H1 (cell line): ENCODE measurements at regions of chr15 and their contacts with region 1.

Region 1: DNA sequence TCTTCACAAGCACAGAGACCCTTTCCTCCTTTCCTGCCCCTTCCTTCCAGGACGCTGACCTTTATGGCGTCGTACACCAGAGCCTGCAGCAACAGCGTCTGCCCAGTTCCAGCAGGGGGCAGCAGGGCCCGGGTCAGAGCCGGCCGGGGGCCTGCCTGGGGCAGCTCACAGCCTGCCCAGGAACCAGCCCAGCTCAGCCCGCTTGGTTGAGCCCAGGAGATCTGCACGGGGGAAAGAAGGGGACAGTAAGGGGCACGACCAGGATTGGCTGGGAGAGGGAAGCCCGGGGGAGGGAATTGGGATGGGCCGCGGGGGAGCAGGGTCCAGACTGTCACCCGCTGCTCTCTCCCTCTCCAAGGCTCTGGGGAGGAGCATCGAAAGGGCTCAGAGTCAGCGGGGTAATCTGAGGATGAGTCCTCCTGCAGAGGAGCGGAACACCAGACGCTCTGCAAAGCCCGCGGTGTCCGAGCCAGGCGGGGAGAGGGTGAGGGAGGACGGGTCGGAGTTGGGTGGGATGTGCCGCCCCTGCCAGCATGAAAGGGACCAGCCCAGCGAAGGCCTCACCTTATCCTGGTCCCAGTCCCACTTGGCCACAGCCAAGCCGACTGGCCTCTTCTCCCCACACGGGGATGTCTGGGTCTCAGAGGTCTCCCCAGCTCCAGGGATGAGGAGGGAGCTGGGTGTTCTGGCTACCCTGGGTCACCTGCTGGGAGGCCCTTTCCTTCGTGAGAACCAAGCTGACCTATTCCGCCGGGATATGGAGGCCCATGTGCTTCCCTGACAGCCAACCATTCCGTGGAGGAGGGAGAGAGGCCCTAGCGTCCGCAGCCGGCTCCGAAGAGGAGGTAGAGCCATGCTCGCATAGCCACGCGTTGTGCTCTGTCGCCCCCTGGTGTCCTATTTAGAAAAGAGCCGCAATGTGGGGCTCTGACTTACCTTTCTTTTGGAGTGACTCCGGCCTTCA is 7.4 kb upstream of the IGDCC3 start:
- DNase-seq: peak; percentile 70 to 94
- H3K4me3 ChIP-seq: peak overlapping the region in 3 of 4 experiments; percentile 22 to 47 (median 32); a peak in 4 of 8 replicates
- H3K27ac ChIP-seq: no peak overlapping the region
- H3K4me1 ChIP-seq: peaks cover 0 to 15% (median 6%) of the 10 kb centered on the region in 4 experiments; a peak in 6 of 7 replicates
- H3K27me3 ChIP-seq: peaks cover 0 to 1% (median 0%) of the 10 kb centered on the region in 4 experiments; a peak in 2 of 7 replicates
- CTCF ChIP-seq: peak; percentile 86 to 97 (median 96)
- EP300 ChIP-seq: 0 out of 3 replicates have a peak, but pooled peaks of 1 of the 2 experiments have one; percentile 2
- POLR2A ChIP-seq: 0 out of 3 replicates have a peak, but pooled peaks of 1 of the 2 experiments have one; percentile 24
- RAD21 ChIP-seq: peak; percentile 96 to 97

Region 2: GRCh38 chr15:65318870-65319356 is 66.3 kb before region 1 on chr15:
- CTCF ChIA-PET with region 1: interaction called, 547 read pairs
- POLR2A ChIA-PET with region 1: interaction called, 50 read pairs
- DNase-seq: peak in 1 of 2 experiments; percentile 90
- H3K4me3 ChIP-seq: no peak overlapping the region
- H3K27ac ChIP-seq: no peak overlapping the region
- H3K4me1 ChIP-seq: no peaks in the 10 kb centered on the region
- H3K27me3 ChIP-seq: 0 out of 7 replicates have a peak, but pooled peaks cover 0 to 3% (median 0%) of the 10 kb centered on the region in 4 experiments
- CTCF ChIP-seq: peak; percentile 62 to 98 (median 92)
- EP300 ChIP-seq: no peak
- POLR2A ChIP-seq: no peak
- RAD21 ChIP-seq: peak; percentile 99 to 100

Region 3: DNA sequence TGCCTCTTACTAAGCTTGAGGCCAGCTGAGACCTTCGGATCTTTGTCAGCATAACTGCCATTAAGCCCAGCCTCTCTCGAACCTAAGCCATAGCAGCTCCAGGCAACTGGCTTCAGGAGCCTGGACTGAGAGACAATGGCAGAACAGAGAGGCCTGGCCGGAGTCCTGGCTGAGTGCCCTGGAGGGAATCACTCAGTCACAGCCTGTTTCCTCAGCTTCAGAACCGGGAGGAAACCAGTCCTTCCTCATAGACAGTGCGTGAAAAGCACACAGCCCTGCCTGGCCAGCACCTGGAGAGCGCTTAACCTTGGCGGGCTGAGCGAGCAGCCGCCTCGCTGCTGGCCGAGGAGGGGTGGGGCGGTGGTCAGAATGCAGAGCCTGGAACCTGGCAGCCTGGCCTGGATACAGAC is 59.1 kb before region 1 on chr15:
- CTCF ChIA-PET with region 1: interaction called, 547 read pairs
- POLR2A ChIA-PET with region 1: interaction called, 50 read pairs
- DNase-seq: no peak
- H3K4me3 ChIP-seq: no peak overlapping the region
- H3K27ac ChIP-seq: no peak overlapping the region
- H3K4me1 ChIP-seq: peaks cover 0 to 7% (median 1%) of the 10 kb centered on the region in 4 experiments; a peak in 4 of 7 replicates
- H3K27me3 ChIP-seq: 0 out of 7 replicates have a peak, but pooled peaks cover 0 to 3% (median 0%) of the 10 kb centered on the region in 4 experiments
- CTCF ChIP-seq: no peak
- EP300 ChIP-seq: no peak
- POLR2A ChIP-seq: no peak
- RAD21 ChIP-seq: no peak

Region 4: GRCh38 chr15:65336493-65337455 is 48.4 kb before region 1 on chr15:
- CTCF ChIA-PET with region 1: interaction called, 50 read pairs
- POLR2A ChIA-PET with region 1: interaction called, 3 read pairs
- DNase-seq: no peak
- H3K4me3 ChIP-seq: no peak overlapping the region
- H3K27ac ChIP-seq: no peak overlapping the region
- H3K4me1 ChIP-seq: peaks cover 20 to 48% (median 37%) of the 10 kb centered on the region in 4 experiments
- H3K27me3 ChIP-seq: no peaks in the 10 kb centered on the region
- CTCF ChIP-seq: peak in 2 of 3 experiments; percentile 28 to 38; a peak in 2 of 4 replicates
- EP300 ChIP-seq: no peak
- POLR2A ChIP-seq: no peak
- RAD21 ChIP-seq: peak; percentile 30 to 50; a peak in 3 of 4 replicates

Region 5: GRCh38 chr15:65368302-65369211 is 16.6 kb before region 1 on chr15:
- CTCF ChIA-PET with region 1: interaction called, 92 read pairs
- POLR2A ChIA-PET with region 1: interaction called, 59 read pairs
- DNase-seq: peak; percentile 60 to 63
- H3K4me3 ChIP-seq: peak overlapping the region in 2 of 4 experiments; percentile 19 to 27; a peak in 3 of 8 replicates
- H3K27ac ChIP-seq: peak overlapping the region; percentile 26
- H3K4me1 ChIP-seq: peaks cover 31 to 56% (median 42%) of the 10 kb centered on the region in 4 experiments
- H3K27me3 ChIP-seq: no peaks in the 10 kb centered on the region
- CTCF ChIP-seq: no peak
- EP300 ChIP-seq: no peak
- POLR2A ChIP-seq: no peak
- RAD21 ChIP-seq: no peak

Region 6: DNA sequence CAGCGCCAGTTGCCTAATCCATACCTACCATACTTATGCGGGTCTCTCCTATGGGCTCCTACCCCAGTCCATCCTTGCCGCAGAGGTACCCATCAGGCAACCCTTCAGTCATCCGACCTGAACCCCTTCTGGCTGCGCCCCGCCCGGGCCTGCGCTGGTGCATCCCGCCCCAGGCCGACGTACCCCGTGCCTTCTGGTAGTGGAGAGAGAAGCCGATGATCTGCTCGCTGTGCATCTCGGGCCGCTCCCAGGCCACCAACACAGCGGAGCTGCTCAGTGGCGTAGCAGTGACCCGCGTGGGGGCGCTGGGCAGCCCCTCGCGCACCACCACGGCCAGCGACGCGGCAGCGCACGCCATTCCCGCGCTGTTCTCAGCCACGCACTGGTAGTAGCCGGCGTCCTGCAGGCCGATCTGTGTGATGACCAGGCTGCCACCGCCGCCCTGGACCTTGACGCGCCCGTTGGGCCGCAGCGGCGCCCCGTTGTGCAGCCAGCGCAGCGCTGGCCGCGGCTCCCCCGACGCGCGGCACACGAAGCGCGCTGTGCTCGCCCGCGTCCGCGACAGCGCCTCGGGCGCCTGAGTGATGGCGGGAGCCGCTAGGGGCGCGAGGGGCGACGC is 10.5 kb after region 1 on chr15:
- CTCF ChIA-PET with region 1: interaction called, 68 read pairs
- POLR2A ChIA-PET with region 1: interaction called, 9 read pairs
- DNase-seq: peak in 1 of 2 experiments; percentile 62
- H3K4me3 ChIP-seq: peak overlapping the region; percentile 24 to 62 (median 28); a peak in 6 of 8 replicates
- H3K27ac ChIP-seq: no peak overlapping the region
- H3K4me1 ChIP-seq: peaks cover 0 to 17% (median 5%) of the 10 kb centered on the region in 4 experiments; a peak in 5 of 7 replicates
- H3K27me3 ChIP-seq: peaks cover 14 to 39% (median 35%) of the 10 kb centered on the region in 4 experiments
- CTCF ChIP-seq: peak in 1 of 3 experiments; percentile 37; a peak in 1 of 4 replicates
- EP300 ChIP-seq: no peak
- POLR2A ChIP-seq: no peak
- RAD21 ChIP-seq: no peak

Region 7: GRCh38 chr15:65421360-65422070 is 36.3 kb after region 1 on chr15:
- CTCF ChIA-PET with region 1: interaction called, 15 read pairs
- POLR2A ChIA-PET with region 1: interaction called, 7 read pairs
- DNase-seq: peak in 1 of 2 experiments; percentile 90
- H3K4me3 ChIP-seq: peak overlapping the region; percentile 82 to 91 (median 86)
- H3K27ac ChIP-seq: peak overlapping the region; percentile 71
- H3K4me1 ChIP-seq: peaks cover 16 to 48% (median 31%) of the 10 kb centered on the region in 4 experiments
- H3K27me3 ChIP-seq: peaks cover 0 to 16% (median 9%) of the 10 kb centered on the region in 4 experiments; a peak in 4 of 7 replicates
- CTCF ChIP-seq: no peak
- EP300 ChIP-seq: no peak; a peak in 1 of 3 replicates
- POLR2A ChIP-seq: peak in 1 of 2 experiments; percentile 51; a peak in 2 of 3 replicates
- RAD21 ChIP-seq: peak; percentile 0 to 23; a peak in 2 of 4 replicates